Mammary epithelial cell (primary cell): ENCODE measurements at regions of chr11 and their contacts with region 1.

Region 1: DNA sequence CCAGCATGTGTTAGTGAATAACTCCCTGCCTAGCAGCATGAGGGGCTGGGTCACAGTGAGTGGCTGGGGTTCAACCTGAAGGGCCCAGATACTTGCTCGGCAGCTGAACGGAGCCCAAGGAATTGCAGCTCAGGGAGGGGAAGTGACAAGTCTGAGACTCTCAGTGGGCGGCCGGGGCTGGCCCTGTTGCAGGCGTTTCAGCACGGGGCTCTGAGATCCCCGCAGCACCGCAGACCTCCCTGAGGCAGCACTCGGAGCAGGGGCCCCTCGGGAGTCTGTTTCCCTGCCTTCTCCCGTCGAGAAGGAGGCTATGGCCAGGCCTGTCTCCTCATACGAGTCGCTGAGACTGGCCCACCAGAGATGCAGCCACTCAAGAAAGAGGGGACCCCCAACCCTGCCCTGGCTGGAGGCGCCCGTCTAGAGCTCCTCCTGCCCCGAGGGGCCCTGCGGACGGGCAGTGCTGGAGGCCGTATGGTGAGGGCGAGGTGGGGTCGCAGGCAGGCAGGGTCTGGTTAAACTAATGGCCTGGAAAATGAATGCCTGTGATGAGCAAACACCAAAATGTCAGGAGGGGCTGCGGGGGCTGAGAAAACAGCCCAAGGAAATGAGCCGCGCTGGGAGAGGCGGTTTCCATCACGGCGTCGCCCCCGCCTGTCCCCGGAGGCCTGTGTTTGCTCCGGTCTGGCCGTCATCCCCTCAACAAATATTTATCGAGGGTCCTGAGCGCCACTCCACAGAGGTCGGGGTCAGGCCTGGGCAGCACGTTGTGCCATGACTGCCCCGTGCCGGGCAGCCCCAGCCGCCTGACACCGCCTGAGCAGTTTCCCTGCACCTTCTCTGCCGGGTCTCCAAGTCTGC is 9.3 kb downstream of the TSSC4 start:
- DNase-seq: no peak
- H3K4me3 ChIP-seq: no peak overlapping the region
- H3K27ac ChIP-seq: no peak overlapping the region
- H3K4me1 ChIP-seq: no peaks in the 10 kb centered on the region
- H3K27me3 ChIP-seq: no peaks in the 10 kb centered on the region
- CTCF ChIP-seq: no peak

Region 2: GRCh38 chr11:2186669-2187279 is 223.1 kb before region 1 on chr11:
- CTCF ChIA-PET with region 1: no interaction called
- dilution Hi-C with region 1: loop called (anchors 5 kb)
- in situ Hi-C with region 1: no loop called
- intact Hi-C with region 1: no loop called
- DNase-seq: no peak
- H3K4me3 ChIP-seq: no peak overlapping the region
- H3K27ac ChIP-seq: no peak overlapping the region
- H3K4me1 ChIP-seq: no peaks in the 10 kb centered on the region
- H3K27me3 ChIP-seq: peaks cover 5% of the 10 kb centered on the region
- CTCF ChIP-seq: peak; percentile 31 to 52

Region 3: GRCh38 chr11:2233693-2234455 is 176.0 kb before region 1 on chr11:
- CTCF ChIA-PET with region 1: no interaction called
- dilution Hi-C with region 1: no loop called
- in situ Hi-C with region 1: no loop called
- intact Hi-C with region 1: no loop called
- DNase-seq: no peak
- H3K4me3 ChIP-seq: no peak overlapping the region
- H3K27ac ChIP-seq: no peak overlapping the region
- H3K4me1 ChIP-seq: no peaks in the 10 kb centered on the region
- H3K27me3 ChIP-seq: no peaks in the 10 kb centered on the region
- CTCF ChIP-seq: no peak

Region 4: GRCh38 chr11:2325719-2326118 is 84.1 kb before region 1 on chr11:
- CTCF ChIA-PET with region 1: no interaction called
- dilution Hi-C with region 1: loop called (anchors 5 kb)
- in situ Hi-C with region 1: loop called in 1 of 2 experiments (anchors 25 kb)
- intact Hi-C with region 1: no loop called
- DNase-seq: peak; percentile 61
- H3K4me3 ChIP-seq: no peak overlapping the region
- H3K27ac ChIP-seq: no peak overlapping the region
- H3K4me1 ChIP-seq: peaks cover 5% of the 10 kb centered on the region
- H3K27me3 ChIP-seq: no peaks in the 10 kb centered on the region
- CTCF ChIP-seq: no peak

Region 5: DNA sequence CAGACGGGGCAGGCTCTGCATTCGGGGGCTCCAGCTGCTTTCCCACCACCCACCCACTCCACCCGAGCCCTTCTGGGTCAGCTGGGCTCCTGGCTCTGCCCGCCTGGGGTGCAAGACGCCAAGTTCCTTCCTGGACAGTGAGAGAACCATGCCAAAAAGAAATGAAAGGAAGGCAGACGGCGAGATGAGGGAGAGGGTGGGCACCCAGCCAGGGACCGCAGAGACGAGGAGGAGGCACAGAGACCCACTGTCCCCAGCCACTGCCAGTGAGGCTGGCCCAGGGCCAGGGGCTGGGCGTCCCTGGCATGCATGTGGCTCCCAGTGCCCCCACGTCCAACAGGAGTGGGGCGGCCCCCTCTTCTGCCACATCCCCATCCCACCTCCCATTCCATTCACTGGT is 43.6 kb before region 1 on chr11:
- CTCF ChIA-PET with region 1: no interaction called
- dilution Hi-C with region 1: loop called (anchors 5 kb)
- in situ Hi-C with region 1: no loop called
- intact Hi-C with region 1: no loop called
- DNase-seq: no peak
- H3K4me3 ChIP-seq: no peak overlapping the region
- H3K27ac ChIP-seq: no peak overlapping the region
- H3K4me1 ChIP-seq: no peaks in the 10 kb centered on the region
- H3K27me3 ChIP-seq: peaks cover 2% of the 10 kb centered on the region
- CTCF ChIP-seq: no peak

Region 6: GRCh38 chr11:2522671-2523141 is 112.9 kb after region 1 on chr11:
- CTCF ChIA-PET with region 1: no interaction called
- dilution Hi-C with region 1: loop called (anchors 5 kb)
- in situ Hi-C with region 1: no loop called
- intact Hi-C with region 1: no loop called
- DNase-seq: no peak
- H3K4me3 ChIP-seq: no peak overlapping the region
- H3K27ac ChIP-seq: no peak overlapping the region
- H3K4me1 ChIP-seq: no peaks in the 10 kb centered on the region
- H3K27me3 ChIP-seq: peaks cover 5% of the 10 kb centered on the region
- CTCF ChIP-seq: no peak